ENCODE measurements at regions of chr17 and their contacts with region 1.

Region 1: GRCh38 chr17:59331129-59331928 is at the start of gene YPEL2:
- DNase-seq: peak; percentile 95

Region 2: GRCh38 chr17:59440784-59441441 is 109.6 kb after region 1 on chr17:
- in situ Hi-C with region 1: loop called (anchors 25 kb)
- DNase-seq: peak; percentile 84